Activated naive CD4-positive, alpha-beta T cell treated with anti-CD3 and anti-CD28 coated beads for 36 hours (primary cell): ENCODE measurements at regions of chr18 and their contacts with region 1.

Region 1: DNA sequence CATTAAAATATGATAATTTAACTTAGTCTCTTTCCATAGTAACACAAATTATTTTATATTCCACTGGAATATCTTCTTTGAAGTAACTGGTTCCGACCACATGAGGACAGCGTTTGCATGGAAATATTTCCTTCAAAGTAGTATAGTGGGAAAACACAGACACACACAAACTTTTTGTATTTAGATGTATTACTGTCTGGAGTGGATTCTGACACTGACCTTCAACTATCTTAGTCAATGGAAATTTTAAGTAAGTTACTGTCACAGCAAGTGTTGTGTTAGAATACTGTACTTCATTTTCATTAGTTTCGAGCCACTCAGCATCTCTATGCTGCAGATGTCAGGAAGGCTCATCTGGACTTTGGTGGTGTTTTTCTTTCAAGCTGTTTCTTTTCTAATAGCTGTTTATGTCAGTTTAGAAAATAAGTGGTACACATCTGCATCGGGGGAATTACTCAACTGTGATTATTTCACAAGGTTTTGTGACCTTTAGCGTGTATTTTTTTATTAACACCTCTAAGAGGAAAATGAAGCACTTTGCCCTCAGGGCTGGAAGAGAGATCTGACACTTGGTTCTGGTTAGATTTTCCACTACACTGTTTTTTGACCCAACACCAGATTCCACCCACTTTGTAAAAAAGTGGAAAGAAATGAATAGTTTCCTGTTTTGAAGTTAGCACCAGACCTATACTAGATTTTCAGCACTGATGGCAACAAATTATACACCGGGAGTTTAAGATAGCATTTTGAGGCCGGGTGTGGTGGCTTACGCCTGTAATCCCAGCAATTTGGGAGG is 18.9 kb upstream of the THOC1 start:
- DNase-seq: peak; percentile 12
- H3K4me3 Mint-ChIP-seq: no peak overlapping the region
- H3K27ac Mint-ChIP-seq: no peak overlapping the region
- H3K4me1 Mint-ChIP-seq: peaks cover 3% of the 10 kb centered on the region
- H3K27me3 Mint-ChIP-seq: peaks cover 13% of the 10 kb centered on the region

Region 2: DNA sequence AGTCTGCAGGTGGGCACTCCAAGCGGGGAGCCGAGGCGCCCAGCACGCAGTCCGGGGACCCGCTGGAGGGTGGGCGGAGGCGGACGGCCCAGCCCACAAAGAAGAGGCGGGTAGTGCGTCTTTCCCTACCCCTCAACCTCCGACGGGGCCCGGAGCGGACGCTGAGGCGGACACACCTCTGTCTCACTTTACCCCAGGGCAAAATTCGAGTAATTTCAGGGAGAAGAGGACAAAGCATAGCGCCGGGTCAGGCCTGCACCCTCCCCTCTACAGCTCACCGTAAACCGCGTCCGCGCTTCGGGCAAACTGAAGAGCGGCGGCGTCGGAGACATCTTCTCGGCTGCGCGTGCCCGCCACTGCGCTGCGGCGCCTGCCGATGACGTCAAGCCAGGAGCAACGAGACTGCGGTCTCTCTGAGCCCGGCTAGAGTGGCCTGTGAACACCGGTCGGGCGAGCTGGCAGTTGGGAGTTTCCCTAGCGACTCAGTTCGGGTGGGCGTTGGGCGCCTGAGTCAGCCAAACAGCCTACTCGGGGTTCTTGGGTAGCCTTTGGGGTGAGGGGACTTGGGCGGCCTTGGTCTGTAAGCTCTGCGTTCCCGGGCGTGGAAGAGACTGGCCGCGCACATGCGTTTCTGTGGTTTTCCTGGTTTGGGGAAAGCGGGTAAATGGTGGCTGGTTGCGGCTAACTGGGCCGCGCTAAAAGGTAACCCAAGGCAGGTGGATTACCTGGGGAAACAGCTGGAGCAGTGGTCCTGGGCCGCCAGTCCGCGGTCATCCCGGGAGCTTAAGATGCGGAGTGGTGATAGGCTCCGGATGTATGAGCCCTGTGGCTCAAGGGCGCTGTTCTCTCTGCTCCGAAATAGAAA is 18.8 kb before region 1 on chr18 and contains the start of gene THOC1:
- CTCF ChIA-PET with region 1: no interaction called
- intact Hi-C with region 1: no loop called
- DNase-seq: peak; percentile 97
- H3K4me3 Mint-ChIP-seq: peak within 1 kb of the TSS; percentile 95
- H3K27ac Mint-ChIP-seq: peak within 1 kb of the TSS; percentile 99
- H3K4me1 Mint-ChIP-seq: peaks cover 39% of the 10 kb centered on the region
- H3K27me3 Mint-ChIP-seq: no peaks in the 10 kb centered on the region
- total RNA-seq, gene THOC1: 63.5 to 66.2 TPM

Region 3: DNA sequence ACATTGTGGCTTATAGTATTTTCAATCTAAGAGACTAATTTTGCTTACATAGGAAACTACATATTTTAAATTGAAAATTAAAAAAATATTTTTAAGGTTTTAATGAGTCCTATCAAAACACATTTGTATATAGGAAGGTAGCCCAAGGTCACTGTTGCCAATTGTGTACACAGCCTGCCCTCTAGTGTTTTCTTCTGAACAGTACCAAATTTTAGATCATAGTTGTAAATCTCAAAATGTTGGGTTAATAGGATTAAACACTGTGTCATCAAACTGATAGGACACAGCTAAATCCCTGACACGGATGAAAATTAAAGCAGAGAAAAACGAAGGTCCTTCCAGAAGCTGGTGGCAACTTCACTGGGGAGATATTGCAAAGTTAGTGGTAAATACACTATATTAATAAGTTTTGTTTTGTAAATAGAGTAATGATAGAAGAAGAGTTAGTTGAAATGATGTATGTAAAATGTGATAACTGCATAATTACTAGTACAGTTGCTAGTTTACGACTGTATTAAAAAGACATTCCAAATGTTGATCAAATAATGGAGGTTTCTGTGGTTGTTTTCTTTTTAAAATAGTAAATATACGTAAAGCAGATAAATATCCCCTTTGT is 329.8 kb after region 1 on chr18:
- CTCF ChIA-PET with region 1: no interaction called
- intact Hi-C with region 1: loop called (anchors 1 kb)
- DNase-seq: peak; percentile 8
- H3K4me3 Mint-ChIP-seq: no peak overlapping the region
- H3K27ac Mint-ChIP-seq: no peak overlapping the region
- H3K4me1 Mint-ChIP-seq: no peaks in the 10 kb centered on the region
- H3K27me3 Mint-ChIP-seq: no peaks in the 10 kb centered on the region